ENCODE measurements at regions of chrX and their contacts with region 1.

Region 1: DNA sequence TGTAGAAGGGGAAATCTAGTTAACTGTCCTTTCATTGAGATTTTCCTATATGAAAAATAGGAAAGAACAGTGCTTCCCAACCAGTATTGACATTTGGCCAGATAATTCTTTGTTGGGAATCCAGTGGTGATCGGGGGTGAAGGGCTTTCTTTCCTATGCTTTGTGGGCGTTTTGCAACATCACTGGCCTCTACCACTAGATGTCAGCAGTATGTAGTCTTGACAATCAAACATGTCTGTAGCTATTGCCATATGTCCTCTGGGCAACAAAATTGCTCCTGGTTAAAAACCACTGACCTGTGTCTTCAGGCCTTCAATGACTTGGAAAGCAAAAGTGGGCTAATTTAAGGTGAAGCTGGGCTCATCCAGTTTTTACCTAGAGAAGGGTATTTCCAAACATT is 658.5 kb downstream of the DACH2 start:
- DNase-seq: peak; percentile 27 to 30
- H3K4me3 ChIP-seq: no peak overlapping the region
- H3K4me3 Mint-ChIP-seq: no peak overlapping the region
- H3K27ac Mint-ChIP-seq: no peak overlapping the region
- H3K4me1 ChIP-seq: no peaks in the 10 kb centered on the region
- H3K4me1 Mint-ChIP-seq: no peaks in the 10 kb centered on the region
- H3K27me3 ChIP-seq: no peaks in the 10 kb centered on the region
- H3K27me3 Mint-ChIP-seq: no peaks in the 10 kb centered on the region
- CTCF ChIP-seq: peak; percentile 30 to 64

Region 2: DNA sequence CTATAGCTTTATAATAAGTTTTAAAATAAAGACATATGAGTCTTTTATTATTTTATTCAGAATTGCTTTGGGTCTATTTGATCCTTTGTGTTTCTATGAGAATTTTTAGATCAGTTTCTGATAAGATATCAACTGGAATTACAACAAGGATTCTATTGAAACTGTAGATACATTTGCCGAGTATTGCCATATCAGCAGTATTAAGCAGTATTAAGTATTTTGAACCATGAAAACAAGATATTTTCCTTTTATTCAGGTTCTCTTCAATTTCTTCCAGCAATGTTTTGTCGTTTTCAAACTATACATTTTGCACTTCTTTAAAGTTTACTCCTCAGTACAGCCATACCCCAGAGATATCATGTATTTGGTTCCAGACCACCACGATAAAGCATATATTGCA is 59.7 kb before region 1 on chrX:
- CTCF ChIA-PET with region 1: no interaction called
- POLR2A ChIA-PET with region 1: no interaction called
- intact Hi-C with region 1: no loop called
- DNase-seq: no peak
- H3K4me3 ChIP-seq: no peak overlapping the region
- H3K4me3 Mint-ChIP-seq: no peak overlapping the region
- H3K27ac Mint-ChIP-seq: no peak overlapping the region
- H3K4me1 ChIP-seq: no peaks in the 10 kb centered on the region
- H3K4me1 Mint-ChIP-seq: no peaks in the 10 kb centered on the region
- H3K27me3 ChIP-seq: no peaks in the 10 kb centered on the region
- H3K27me3 Mint-ChIP-seq: no peaks in the 10 kb centered on the region
- CTCF ChIP-seq: no peak

Region 3: GRCh38 chrX:86930414-86930813 is 123.6 kb after region 1 on chrX:
- CTCF ChIA-PET with region 1: no interaction called
- POLR2A ChIA-PET with region 1: no interaction called
- intact Hi-C with region 1: loop called (anchors 5 kb)
- DNase-seq: peak; percentile 22 to 60
- H3K4me3 ChIP-seq: no peak overlapping the region
- H3K4me3 Mint-ChIP-seq: peak overlapping the region; percentile 58
- H3K27ac Mint-ChIP-seq: peak overlapping the region; percentile 95
- H3K4me1 ChIP-seq: peaks cover 21% of the 10 kb centered on the region
- H3K4me1 Mint-ChIP-seq: peaks cover 7% of the 10 kb centered on the region
- H3K27me3 ChIP-seq: no peaks in the 10 kb centered on the region
- H3K27me3 Mint-ChIP-seq: no peaks in the 10 kb centered on the region
- CTCF ChIP-seq: no peak

Region 4: GRCh38 chrX:87006561-87006960 is 199.8 kb after region 1 on chrX:
- CTCF ChIA-PET with region 1: no interaction called
- POLR2A ChIA-PET with region 1: no interaction called
- intact Hi-C with region 1: no loop called
- DNase-seq: no peak
- H3K4me3 ChIP-seq: no peak overlapping the region
- H3K4me3 Mint-ChIP-seq: no peak overlapping the region
- H3K27ac Mint-ChIP-seq: no peak overlapping the region
- H3K4me1 ChIP-seq: no peaks in the 10 kb centered on the region
- H3K4me1 Mint-ChIP-seq: no peaks in the 10 kb centered on the region
- H3K27me3 ChIP-seq: no peaks in the 10 kb centered on the region
- H3K27me3 Mint-ChIP-seq: no peaks in the 10 kb centered on the region
- CTCF ChIP-seq: no peak

Region 5: GRCh38 chrX:87040039-87040438 is 233.3 kb after region 1 on chrX:
- CTCF ChIA-PET with region 1: no interaction called
- POLR2A ChIA-PET with region 1: no interaction called
- intact Hi-C with region 1: no loop called
- DNase-seq: no peak
- H3K4me3 ChIP-seq: no peak overlapping the region
- H3K4me3 Mint-ChIP-seq: no peak overlapping the region
- H3K27ac Mint-ChIP-seq: no peak overlapping the region
- H3K4me1 ChIP-seq: no peaks in the 10 kb centered on the region
- H3K4me1 Mint-ChIP-seq: no peaks in the 10 kb centered on the region
- H3K27me3 ChIP-seq: no peaks in the 10 kb centered on the region
- H3K27me3 Mint-ChIP-seq: no peaks in the 10 kb centered on the region
- CTCF ChIP-seq: no peak

Region 6: GRCh38 chrX:87299563-87300160 is 492.9 kb after region 1 on chrX:
- CTCF ChIA-PET with region 1: no interaction called
- POLR2A ChIA-PET with region 1: no interaction called
- intact Hi-C with region 1: loop called (anchors 1 kb)
- DNase-seq: peak in 1 of 2 experiments; percentile 1
- H3K4me3 ChIP-seq: no peak overlapping the region
- H3K4me3 Mint-ChIP-seq: no peak overlapping the region
- H3K27ac Mint-ChIP-seq: no peak overlapping the region
- H3K4me1 ChIP-seq: no peaks in the 10 kb centered on the region
- H3K4me1 Mint-ChIP-seq: no peaks in the 10 kb centered on the region
- H3K27me3 ChIP-seq: no peaks in the 10 kb centered on the region
- H3K27me3 Mint-ChIP-seq: no peaks in the 10 kb centered on the region
- CTCF ChIP-seq: peak; percentile 28 to 39